BJ (cell line): ENCODE measurements at regions of chr5 and their contacts with region 1.

Region 1: DNA sequence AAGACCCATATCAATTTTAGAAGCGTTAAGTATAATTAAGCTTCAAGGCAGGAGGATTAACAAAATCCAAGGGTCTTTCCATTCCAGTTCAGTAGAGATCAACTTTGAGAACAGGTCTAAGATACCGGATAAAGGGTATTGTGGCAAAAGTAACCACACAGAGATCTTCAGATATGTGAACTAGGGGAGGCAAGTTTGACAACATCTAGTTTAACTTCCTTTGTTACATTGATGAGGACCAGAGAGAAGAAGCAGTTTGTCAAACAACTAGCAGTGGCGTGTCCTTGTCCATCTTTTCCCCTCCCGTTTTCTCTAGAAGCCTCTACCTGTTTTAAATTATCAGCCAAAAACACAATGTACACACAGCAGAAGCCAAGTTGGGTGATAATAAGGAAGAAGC is 8.6 kb downstream of the SLC36A2 start:
- DNase-seq: no peak
- H3K4me3 ChIP-seq: no peak overlapping the region
- H3K27me3 ChIP-seq: no peaks in the 10 kb centered on the region
- CTCF ChIP-seq: no peak

Region 2: GRCh38 chr5:151223469-151224264 is 115.1 kb before region 1 on chr5 and contains the start of gene CCDC69:
- CTCF ChIA-PET with region 1: no interaction called
- POLR2A ChIA-PET with region 1: no interaction called
- DNase-seq: peak; percentile 4
- H3K4me3 ChIP-seq: peak within 1 kb of the TSS; percentile 61
- H3K27me3 ChIP-seq: no peaks in the 10 kb centered on the region
- CTCF ChIP-seq: peak; percentile 41
- polyA plus RNA-seq, gene CCDC69: 0.93 and 1.0 TPM in 2 replicates

Region 3: GRCh38 chr5:151284392-151284967 is 54.3 kb before region 1 on chr5:
- CTCF ChIA-PET with region 1: no interaction called
- POLR2A ChIA-PET with region 1: no interaction called
- DNase-seq: no peak
- H3K4me3 ChIP-seq: no peak overlapping the region
- H3K27me3 ChIP-seq: no peaks in the 10 kb centered on the region; the same call in 1 of the 2 replicates
- CTCF ChIP-seq: no peak

Region 4: DNA sequence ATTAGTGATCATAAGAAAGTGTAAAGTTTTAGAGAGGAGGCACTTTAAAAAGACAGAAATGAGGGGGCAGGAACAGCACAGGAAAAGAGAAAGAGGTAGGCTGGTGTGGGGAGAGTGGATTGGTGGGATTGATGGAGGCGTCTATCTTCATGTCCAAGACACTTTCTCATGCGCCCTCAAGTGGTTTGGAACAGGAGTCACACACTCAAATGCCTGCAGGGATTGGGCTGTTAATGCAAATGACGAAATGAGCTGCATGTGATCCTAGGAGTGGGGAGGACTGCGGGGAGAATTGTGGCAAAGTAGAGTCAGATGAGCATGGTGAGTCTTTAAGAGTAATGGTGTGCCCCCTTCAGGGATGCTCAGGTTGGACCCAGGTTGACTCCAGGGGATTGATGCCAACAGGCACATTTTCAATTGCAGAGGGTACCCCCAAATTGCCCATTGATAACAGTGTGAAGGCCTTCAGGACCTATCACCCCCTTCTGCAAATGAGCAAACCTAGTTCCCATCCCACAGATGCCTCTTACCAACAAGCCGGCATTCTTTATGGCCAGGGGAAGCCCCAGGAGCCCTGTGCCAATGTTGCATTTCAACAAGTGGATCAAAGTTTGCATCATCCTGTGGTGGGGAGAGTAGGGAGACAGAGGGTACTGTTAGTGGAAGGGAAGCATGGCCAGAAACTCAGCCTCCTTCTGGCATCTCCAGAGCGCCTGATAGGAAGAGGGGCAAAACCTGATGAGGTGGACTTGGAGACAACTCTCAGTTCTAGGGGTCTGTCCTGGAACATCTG is 40.5 kb before region 1 on chr5:
- CTCF ChIA-PET with region 1: no interaction called
- POLR2A ChIA-PET with region 1: no interaction called
- DNase-seq: peak; percentile 7
- H3K4me3 ChIP-seq: no peak overlapping the region
- H3K27me3 ChIP-seq: peaks cover 3% of the 10 kb centered on the region
- CTCF ChIP-seq: peak; percentile 64

Region 5: DNA sequence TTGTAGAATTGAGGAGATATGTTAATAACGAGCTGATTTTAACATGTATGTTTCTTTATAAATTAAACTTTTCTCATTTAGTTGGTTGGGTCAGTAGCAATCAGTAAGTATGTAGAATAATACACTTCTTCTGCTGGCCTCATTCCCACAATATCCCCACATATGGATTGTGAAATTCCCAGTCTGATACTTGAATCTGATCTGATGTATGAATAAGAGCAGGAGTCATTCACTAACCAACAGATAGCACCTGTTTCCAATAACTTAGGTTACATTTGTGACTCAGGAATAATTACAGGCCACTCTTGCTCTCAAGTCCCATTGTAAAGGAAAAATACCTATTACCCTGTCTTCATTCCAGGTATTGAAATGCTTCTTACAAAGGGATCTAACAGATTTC is 132.5 kb after region 1 on chr5:
- CTCF ChIA-PET with region 1: no interaction called
- POLR2A ChIA-PET with region 1: interaction called, 10 read pairs
- DNase-seq: no peak
- H3K4me3 ChIP-seq: no peak overlapping the region
- H3K27me3 ChIP-seq: no peaks in the 10 kb centered on the region
- CTCF ChIP-seq: no peak